K562 (cell line): ENCODE measurements at regions of chr16 and their contacts with region 1.

Region 1: DNA sequence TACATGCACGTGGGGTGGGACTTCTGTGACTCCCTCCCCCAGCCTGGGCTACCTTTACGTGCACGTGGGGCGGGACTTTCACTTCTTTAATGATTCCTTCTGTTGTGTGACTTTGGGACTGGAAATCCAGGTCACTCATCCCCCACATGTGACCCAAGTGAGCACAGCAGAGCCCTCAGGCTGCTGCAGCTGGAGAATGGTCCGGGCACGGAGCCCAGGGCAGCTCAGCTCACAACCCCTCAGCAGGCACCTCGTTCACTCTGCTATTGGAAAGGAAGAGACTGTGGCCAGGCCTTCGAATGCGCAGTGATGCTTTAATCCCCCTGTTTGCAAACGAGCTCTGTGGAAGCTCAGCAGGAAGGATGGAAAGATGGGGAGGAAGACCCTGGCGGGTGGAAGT is 14.7 kb downstream of the DBNDD1 start:
- DNase-seq: no peak
- ATAC-seq: no peak
- H3K4me3 ChIP-seq: no peak overlapping the region
- H3K27ac ChIP-seq: no peak overlapping the region
- H3K4me1 ChIP-seq: peaks cover 0 to 48% of the 10 kb centered on the region in 2 experiments; a peak in 3 of 5 replicates
- H3K27me3 ChIP-seq: no peaks in the 10 kb centered on the region
- CTCF ChIP-seq: no peak
- EP300 ChIP-seq: no peak
- POLR2A ChIP-seq: no peak
- RAD21 ChIP-seq: no peak

Region 2: DNA sequence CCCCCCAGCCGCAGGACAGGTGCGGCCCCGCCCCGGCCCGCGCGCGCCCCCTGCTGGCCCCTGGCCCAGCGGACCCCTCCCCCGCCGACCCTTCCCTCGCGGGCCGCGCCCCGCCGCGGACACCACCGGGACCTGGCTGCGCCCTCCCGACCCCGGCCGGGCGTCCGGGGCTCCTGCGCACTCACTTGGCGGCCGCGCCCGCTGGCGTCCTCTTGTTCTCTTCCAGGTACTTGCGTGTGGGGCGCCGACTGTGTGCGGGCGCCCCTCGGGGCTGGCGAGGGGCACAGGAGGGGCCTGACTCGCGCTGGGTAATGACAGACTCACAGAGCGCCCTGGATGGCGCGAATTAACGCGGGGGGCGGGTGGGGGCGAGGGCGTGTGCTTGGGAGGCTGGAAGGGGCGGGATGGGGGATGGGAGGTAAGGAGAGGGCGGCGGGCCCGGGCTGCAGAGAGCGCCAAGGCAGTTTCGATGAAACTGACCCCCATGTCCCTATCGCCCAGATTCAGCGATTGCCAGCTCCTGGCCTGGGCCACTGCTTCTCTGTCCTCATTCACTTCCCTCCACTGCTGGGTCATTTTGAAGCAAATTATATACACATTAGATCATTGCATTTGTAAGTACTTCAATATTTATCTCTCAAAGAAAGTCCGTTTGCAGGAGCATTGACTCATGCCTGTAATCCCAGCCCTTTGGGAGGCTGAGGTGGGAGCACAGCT is 15.1 kb after region 1 on chr16:
- CTCF ChIA-PET with region 1: no interaction called
- POLR2A ChIA-PET with region 1: interaction called, 12 read pairs
- in situ Hi-C with region 1: no loop called
- intact Hi-C with region 1: no loop called
- DNase-seq: peak; percentile 71 to 96 (median 92)
- ATAC-seq: peak; percentile 72
- H3K4me3 ChIP-seq: peak overlapping the region; percentile 67
- H3K27ac ChIP-seq: peak overlapping the region; percentile 65
- H3K4me1 ChIP-seq: peaks cover 16 to 46% of the 10 kb centered on the region in 2 experiments; a peak in 4 of 5 replicates
- H3K27me3 ChIP-seq: no peaks in the 10 kb centered on the region; a peak in 1 of 5 replicates
- CTCF ChIP-seq: peak; percentile 19 to 66 (median 49); a peak in 4 of 6 replicates
- EP300 ChIP-seq: no peak
- POLR2A ChIP-seq: 0 out of 2 replicates have a peak, but pooled peaks have one; percentile 18
- RAD21 ChIP-seq: 0 out of 4 replicates have a peak, but pooled peaks of 1 of the 2 experiments have one; percentile 8

Region 3: GRCh38 chr16:90046971-90047713 is 42.6 kb after region 1 on chr16:
- CTCF ChIA-PET with region 1: no interaction called
- POLR2A ChIA-PET with region 1: no interaction called
- in situ Hi-C with region 1: no loop called
- intact Hi-C with region 1: no loop called
- DNase-seq: peak in 2 of 4 experiments; percentile 31 to 87
- ATAC-seq: peak; percentile 93
- H3K4me3 ChIP-seq: peak overlapping the region; percentile 49
- H3K27ac ChIP-seq: peak overlapping the region; percentile 54
- H3K4me1 ChIP-seq: peaks cover 18 to 39% of the 10 kb centered on the region in 2 experiments; a peak in 3 of 5 replicates
- H3K27me3 ChIP-seq: no peaks in the 10 kb centered on the region
- CTCF ChIP-seq: no peak
- EP300 ChIP-seq: no peak
- POLR2A ChIP-seq: peak; percentile 70; the same call in 1 of the 2 replicates
- RAD21 ChIP-seq: no peak